Mammary epithelial cell (primary cell): ENCODE measurements at regions of chr9 and their contacts with region 1.

Region 1: GRCh38 chr9:97921959-97922724 is at the start of gene TRMO:
- DNase-seq: peak; percentile 96
- H3K4me3 ChIP-seq: peak within 1 kb of the TSS; percentile 58 to 85 (median 67)
- H3K27ac ChIP-seq: peak within 1 kb of the TSS; percentile 88
- H3K4me1 ChIP-seq: peaks cover 9% of the 10 kb centered on the region
- H3K27me3 ChIP-seq: no peaks in the 10 kb centered on the region
- CTCF ChIP-seq: peak; percentile 30 to 72
- total RNA-seq, gene TRMO: 7.6 to 15.3 TPM

Region 2: GRCh38 chr9:97890038-97890437 is 32.1 kb before region 1 on chr9:
- CTCF ChIA-PET with region 1: no interaction called
- dilution Hi-C with region 1: no loop called
- in situ Hi-C with region 1: no loop called
- intact Hi-C with region 1: loop called (anchors 1 kb)
- DNase-seq: no peak
- H3K4me3 ChIP-seq: no peak overlapping the region
- H3K27ac ChIP-seq: no peak overlapping the region
- H3K4me1 ChIP-seq: no peaks in the 10 kb centered on the region
- H3K27me3 ChIP-seq: no peaks in the 10 kb centered on the region
- CTCF ChIP-seq: peak; percentile 75 to 83

Region 3: GRCh38 chr9:97954550-97954989 is 32.4 kb after region 1 on chr9:
- CTCF ChIA-PET with region 1: interaction called, 3 read pairs
- dilution Hi-C with region 1: no loop called
- in situ Hi-C with region 1: no loop called
- intact Hi-C with region 1: loop called (anchors 1 kb)
- DNase-seq: peak; percentile 36
- H3K4me3 ChIP-seq: no peak overlapping the region
- H3K27ac ChIP-seq: no peak overlapping the region
- H3K4me1 ChIP-seq: no peaks in the 10 kb centered on the region
- H3K27me3 ChIP-seq: no peaks in the 10 kb centered on the region
- CTCF ChIP-seq: peak; percentile 68 to 82

Region 4: DNA sequence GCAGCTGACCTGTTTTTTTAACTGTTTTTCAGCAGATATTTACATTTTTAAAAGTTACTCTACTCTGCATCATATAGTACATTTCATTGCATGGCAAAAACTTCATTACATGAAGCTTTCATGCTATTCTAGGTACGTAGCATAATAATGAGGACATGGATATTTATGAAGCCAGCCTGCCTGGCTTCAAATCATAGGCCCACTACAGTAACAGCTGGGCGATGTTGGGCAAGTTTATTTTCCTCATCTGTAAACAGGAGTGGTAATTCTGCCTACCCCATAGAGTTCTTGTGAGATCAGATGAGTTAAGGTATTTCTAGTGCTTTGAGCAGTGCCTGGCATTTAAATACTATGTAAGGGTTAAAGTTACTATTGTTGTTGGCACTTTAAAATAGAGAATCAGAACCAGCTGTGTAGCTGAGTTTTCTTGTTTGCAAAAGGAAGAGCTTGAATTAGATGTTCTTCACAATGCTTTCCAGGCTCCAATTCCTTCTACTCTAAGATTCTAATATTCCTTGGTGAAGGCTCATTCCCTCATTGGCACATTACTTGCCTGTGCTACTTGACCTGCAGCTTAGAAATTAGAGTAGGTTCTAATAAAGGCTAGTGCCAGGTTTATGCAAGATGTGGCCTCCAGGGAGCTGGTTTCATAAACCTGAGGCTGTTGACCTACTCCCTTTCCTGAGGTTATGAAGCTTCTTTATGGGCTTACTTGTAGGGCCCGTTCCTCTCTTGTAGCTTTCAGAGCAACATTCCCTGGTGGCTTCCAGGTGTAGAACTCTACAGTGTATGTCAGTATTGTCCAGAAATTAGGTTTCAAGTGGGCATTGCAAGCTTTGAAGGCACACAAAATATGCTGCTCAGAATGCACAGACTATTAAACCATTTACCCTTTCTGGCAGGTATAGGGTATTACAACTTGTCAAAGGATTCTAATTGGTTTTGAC is 75.5 kb after region 1 on chr9:
- CTCF ChIA-PET with region 1: no interaction called
- dilution Hi-C with region 1: loop called (anchors 5 kb)
- in situ Hi-C with region 1: no loop called
- intact Hi-C with region 1: no loop called
- DNase-seq: no peak
- H3K4me3 ChIP-seq: no peak overlapping the region
- H3K27ac ChIP-seq: no peak overlapping the region
- H3K4me1 ChIP-seq: no peaks in the 10 kb centered on the region
- H3K27me3 ChIP-seq: no peaks in the 10 kb centered on the region
- CTCF ChIP-seq: no peak

Region 5: GRCh38 chr9:98118640-98119601 is 196.8 kb after region 1 on chr9 and contains the start of gene TRIM14:
- CTCF ChIA-PET with region 1: no interaction called
- dilution Hi-C with region 1: no loop called
- in situ Hi-C with region 1: no loop called
- intact Hi-C with region 1: loop called (anchors 2 kb)
- DNase-seq: peak; percentile 64
- H3K4me3 ChIP-seq: peak within 1 kb of the TSS; percentile 37 to 68 (median 62)
- H3K27ac ChIP-seq: peak within 1 kb of the TSS; percentile 37
- H3K4me1 ChIP-seq: peaks cover 6% of the 10 kb centered on the region
- H3K27me3 ChIP-seq: no peaks in the 10 kb centered on the region
- CTCF ChIP-seq: peak in 1 of 2 donors; percentile 20
- total RNA-seq, gene TRIM14: 11.3 to 17.6 TPM

Region 6: GRCh38 chr9:98255578-98256296 is 333.6 kb after region 1 on chr9 and contains the start of gene TBC1D2:
- CTCF ChIA-PET with region 1: no interaction called
- dilution Hi-C with region 1: no loop called
- in situ Hi-C with region 1: loop called in 1 of 2 experiments (anchors 25 kb)
- intact Hi-C with region 1: no loop called
- DNase-seq: peak; percentile 94
- H3K4me3 ChIP-seq: peak within 1 kb of the TSS; percentile 69 to 97 (median 93)
- H3K27ac ChIP-seq: peak within 1 kb of the TSS; percentile 72
- H3K4me1 ChIP-seq: peaks cover 39% of the 10 kb centered on the region
- H3K27me3 ChIP-seq: no peaks in the 10 kb centered on the region
- CTCF ChIP-seq: peak in 1 of 2 donors; percentile 35
- total RNA-seq, gene TBC1D2: 86.7 to 98.2 TPM

Region 7: DNA sequence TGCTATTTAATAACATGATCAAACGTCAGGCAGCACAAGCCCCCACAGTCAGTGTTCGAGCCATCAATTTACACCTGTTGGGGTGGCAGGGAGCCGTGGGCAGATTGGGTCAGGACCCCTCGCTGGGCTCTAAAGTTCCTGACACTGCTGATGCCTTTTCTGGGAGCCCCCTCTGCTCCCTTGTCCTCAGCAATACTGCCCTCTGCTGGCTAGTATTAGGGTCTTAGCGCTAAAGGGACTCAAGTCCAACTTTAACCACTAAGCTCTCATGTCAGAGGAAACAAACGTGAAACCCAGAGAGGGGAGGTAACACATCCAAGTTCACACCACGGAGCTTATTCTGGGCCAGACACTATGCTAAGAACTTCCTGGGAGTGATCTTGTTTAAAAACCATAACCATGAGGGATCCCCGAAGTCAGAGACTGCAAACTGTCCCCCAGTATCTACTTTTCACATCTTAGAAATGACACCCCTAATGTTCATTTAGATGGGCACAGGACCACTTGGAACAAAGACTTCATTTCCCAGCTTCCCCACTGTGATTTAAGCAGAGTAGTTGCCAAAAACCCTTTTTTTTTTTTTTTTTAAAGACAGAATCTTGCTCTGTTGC is 853.8 kb after region 1 on chr9:
- CTCF ChIA-PET with region 1: no interaction called
- dilution Hi-C with region 1: no loop called
- in situ Hi-C with region 1: loop called in 1 of 2 experiments (anchors 25 kb)
- intact Hi-C with region 1: loop called (anchors 5 kb)
- DNase-seq: peak; percentile 20
- H3K4me3 ChIP-seq: no peak overlapping the region
- H3K27ac ChIP-seq: no peak overlapping the region
- H3K4me1 ChIP-seq: no peaks in the 10 kb centered on the region
- H3K27me3 ChIP-seq: no peaks in the 10 kb centered on the region
- CTCF ChIP-seq: peak; percentile 80 to 83